ENCODE measurements at regions of chr5 and their contacts with region 1.

Region 1: GRCh38 chr5:141557681-141558136 is 61.1 kb downstream of the DIAPH1 start:
- DNase-seq: peak; percentile 94
- H3K4me3 ChIP-seq: peak overlapping the region in 2 of 3 experiments; percentile 24 to 25
- H3K27ac ChIP-seq: peak overlapping the region; percentile 45
- H3K4me1 ChIP-seq: peaks cover 35% of the 10 kb centered on the region
- H3K27me3 ChIP-seq: no peaks in the 10 kb centered on the region
- CTCF ChIP-seq: peak; percentile 79 to 87
- POLR2A ChIP-seq: no peak

Region 2: DNA sequence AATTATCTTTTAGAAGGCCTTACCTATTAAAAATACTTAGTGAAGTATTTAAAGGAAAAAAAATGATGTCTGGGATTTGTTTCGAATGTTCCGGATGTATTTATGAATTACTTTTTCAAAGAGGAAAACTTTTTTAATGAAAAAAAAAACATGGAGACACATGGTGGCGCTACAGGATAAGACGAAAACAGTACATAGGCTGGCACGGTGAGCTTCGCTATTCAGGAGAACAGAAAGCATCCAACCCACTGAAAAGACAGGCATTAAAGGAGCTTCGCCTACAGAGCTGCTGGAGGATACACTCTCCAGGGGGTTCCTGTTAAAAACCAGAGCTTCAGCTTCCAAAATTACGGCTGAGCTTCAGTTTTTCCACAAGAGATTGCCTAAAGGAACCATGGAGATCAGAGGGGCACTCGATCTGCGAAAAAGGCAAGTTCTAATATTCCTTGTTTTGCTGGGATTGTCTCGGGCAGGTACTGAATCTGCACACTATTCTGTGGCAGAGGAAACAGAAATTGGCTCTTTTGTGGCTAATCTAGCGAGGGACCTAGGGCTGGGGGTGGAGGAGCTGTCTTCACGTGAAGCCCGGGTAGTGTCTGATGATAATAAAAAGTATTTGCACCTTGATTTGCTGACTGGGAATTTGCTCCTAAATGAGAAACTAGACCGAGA is 334.5 kb before region 1 on chr5 and contains the start of gene PCDHB14:
- CTCF ChIA-PET with region 1: interaction called, 35 read pairs
- POLR2A ChIA-PET with region 1: no interaction called
- dilution Hi-C with region 1: no loop called
- intact Hi-C with region 1: no loop called
- DNase-seq: peak; percentile 31
- H3K4me3 ChIP-seq: peak within 1 kb of the TSS in 1 of 3 experiments; percentile 32
- H3K27ac ChIP-seq: no peak within 1 kb of the TSS
- H3K4me1 ChIP-seq: no peaks in the 10 kb centered on the region
- H3K27me3 ChIP-seq: no peaks in the 10 kb centered on the region
- CTCF ChIP-seq: no peak
- POLR2A ChIP-seq: no peak
- total RNA-seq, gene PCDHB14: 0.55 and 1.0 TPM in 2 replicates

Region 3: DNA sequence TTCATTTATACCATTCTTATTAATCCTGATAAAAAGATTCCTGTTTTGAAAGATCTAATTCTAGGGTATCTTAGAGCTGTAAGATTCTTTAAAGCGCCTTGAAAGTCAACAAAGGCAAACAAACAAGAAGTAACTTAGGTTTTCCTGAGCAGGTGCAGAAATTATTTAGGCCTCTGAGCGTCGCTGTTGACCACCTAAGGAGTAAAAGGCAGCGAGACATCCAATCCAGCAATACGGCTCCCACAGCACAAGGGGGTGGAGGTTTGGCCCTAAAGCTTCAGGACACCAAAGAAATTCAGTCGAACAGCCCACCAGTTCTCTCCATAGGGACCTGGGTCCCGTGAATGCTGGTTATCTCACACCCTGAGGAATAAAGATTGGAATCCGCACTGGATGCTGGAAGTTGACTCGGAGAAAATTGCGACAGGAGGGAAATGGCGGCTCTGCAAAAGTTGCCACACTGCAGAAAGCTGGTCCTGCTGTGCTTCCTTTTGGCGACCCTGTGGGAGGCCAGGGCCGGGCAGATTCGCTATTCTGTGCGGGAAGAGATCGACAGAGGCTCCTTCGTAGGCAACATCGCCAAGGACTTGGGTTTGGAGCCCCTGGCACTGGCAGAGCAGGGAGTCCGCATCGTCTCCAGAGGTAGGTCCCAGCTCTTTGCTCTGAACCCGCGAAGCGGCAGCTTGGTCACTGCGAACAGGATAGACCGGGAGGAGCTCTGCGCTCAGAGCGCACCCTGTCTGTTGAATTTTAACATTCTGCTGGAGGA is 219.0 kb before region 1 on chr5 and contains the start of gene PCDHGA2:
- CTCF ChIA-PET with region 1: interaction called, 38 read pairs
- POLR2A ChIA-PET with region 1: no interaction called
- dilution Hi-C with region 1: no loop called
- intact Hi-C with region 1: no loop called
- DNase-seq: peak; percentile 59
- H3K4me3 ChIP-seq: peak within 1 kb of the TSS in 2 of 3 experiments; percentile 16 to 53
- H3K27ac ChIP-seq: no peak within 1 kb of the TSS
- H3K4me1 ChIP-seq: no peaks in the 10 kb centered on the region
- H3K27me3 ChIP-seq: peaks cover 15 to 66% of the 10 kb centered on the region in 2 experiments
- CTCF ChIP-seq: peak; percentile 43 to 54
- POLR2A ChIP-seq: no peak
- total RNA-seq, gene PCDHGA2: 0.58 and 1.2 TPM in 2 replicates

Region 4: DNA sequence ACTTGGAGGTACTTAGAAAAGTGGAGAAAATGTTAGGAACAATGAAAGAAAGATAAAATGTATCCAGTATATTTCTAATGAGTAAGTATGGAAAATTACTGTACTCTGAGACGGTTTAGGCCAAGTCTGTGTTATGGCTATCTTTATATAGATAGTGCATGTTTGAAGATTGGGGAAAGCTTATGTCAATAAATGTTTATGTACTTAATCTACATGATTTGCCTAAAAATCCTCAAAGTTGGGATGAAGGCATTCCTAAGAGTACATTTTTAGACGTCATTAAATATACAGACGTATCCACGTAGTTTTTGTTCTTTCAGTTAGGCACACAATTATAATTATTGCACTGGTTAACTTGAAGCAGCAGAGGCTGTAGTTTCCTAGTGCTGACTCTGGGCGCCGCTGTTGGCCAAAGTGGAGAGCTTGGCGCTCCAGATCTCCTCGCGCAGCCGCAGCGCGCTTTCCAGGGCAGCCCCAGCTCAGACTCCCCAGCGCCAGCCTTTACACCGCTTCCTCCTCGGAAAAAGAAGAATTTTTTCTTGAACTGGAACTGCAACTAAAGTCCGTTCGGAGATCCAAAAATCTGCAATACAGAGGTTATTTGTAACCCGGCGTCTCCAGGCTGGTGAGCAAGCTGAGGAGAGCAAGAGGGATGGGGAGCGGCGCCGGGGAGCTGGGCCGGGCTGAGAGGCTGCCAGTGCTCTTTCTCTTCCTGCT is 170.3 kb before region 1 on chr5 and contains the start of gene PCDHGB4:
- CTCF ChIA-PET with region 1: interaction called, 15 read pairs
- POLR2A ChIA-PET with region 1: no interaction called
- dilution Hi-C with region 1: no loop called
- intact Hi-C with region 1: no loop called
- DNase-seq: peak; percentile 30
- H3K4me3 ChIP-seq: peak within 1 kb of the TSS in 2 of 3 experiments; percentile 9 to 22
- H3K27ac ChIP-seq: no peak within 1 kb of the TSS
- H3K4me1 ChIP-seq: no peaks in the 10 kb centered on the region
- H3K27me3 ChIP-seq: peaks cover 35 to 78% of the 10 kb centered on the region in 2 experiments
- CTCF ChIP-seq: peak; percentile 46 to 51
- POLR2A ChIP-seq: no peak
- total RNA-seq, gene PCDHGB4: 4.4 and 6.5 TPM in 2 replicates

Region 5: GRCh38 chr5:141420855-141421496 is 136.7 kb before region 1 on chr5 and contains the start of gene PCDHGA11:
- CTCF ChIA-PET with region 1: interaction called, 335 read pairs
- POLR2A ChIA-PET with region 1: interaction called, 8 read pairs
- dilution Hi-C with region 1: no loop called
- intact Hi-C with region 1: loop called (anchors 1 kb)
- DNase-seq: peak; percentile 78
- H3K4me3 ChIP-seq: peak within 1 kb of the TSS; percentile 39 to 83 (median 66)
- H3K27ac ChIP-seq: no peak within 1 kb of the TSS
- H3K4me1 ChIP-seq: peaks cover 15% of the 10 kb centered on the region
- H3K27me3 ChIP-seq: peaks cover 40 to 84% of the 10 kb centered on the region in 2 experiments
- CTCF ChIP-seq: peak; percentile 53 to 71
- POLR2A ChIP-seq: no peak
- total RNA-seq, gene PCDHGA11: 10.3 and 11.5 TPM in 2 replicates

Region 6: DNA sequence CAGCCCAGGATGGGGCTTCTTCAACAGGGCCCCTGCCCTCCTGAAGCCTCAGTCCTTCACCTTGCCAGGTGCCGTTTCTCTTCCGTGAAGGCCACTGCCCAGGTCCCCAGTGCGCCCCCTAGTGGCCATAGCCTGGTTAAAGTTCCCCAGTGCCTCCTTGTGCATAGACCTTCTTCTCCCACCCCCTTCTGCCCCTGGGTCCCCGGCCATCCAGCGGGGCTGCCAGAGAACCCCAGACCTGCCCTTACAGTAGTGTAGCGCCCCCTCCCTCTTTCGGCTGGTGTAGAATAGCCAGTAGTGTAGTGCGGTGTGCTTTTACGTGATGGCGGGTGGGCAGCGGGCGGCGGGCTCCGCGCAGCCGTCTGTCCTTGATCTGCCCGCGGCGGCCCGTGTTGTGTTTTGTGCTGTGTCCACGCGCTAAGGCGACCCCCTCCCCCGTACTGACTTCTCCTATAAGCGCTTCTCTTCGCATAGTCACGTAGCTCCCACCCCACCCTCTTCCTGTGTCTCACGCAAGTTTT is 45.3 kb before region 1 on chr5:
- CTCF ChIA-PET with region 1: interaction called, 25 read pairs
- POLR2A ChIA-PET with region 1: interaction called, 3 read pairs
- dilution Hi-C with region 1: no loop called
- intact Hi-C with region 1: loop called (anchors 1 kb)
- DNase-seq: peak; percentile 76
- H3K4me3 ChIP-seq: peak overlapping the region; percentile 44 to 51 (median 49)
- H3K27ac ChIP-seq: peak overlapping the region; percentile 19
- H3K4me1 ChIP-seq: peaks cover 31% of the 10 kb centered on the region
- H3K27me3 ChIP-seq: no peaks in the 10 kb centered on the region
- CTCF ChIP-seq: peak; percentile 89 to 94
- POLR2A ChIP-seq: no peak

Region 7: DNA sequence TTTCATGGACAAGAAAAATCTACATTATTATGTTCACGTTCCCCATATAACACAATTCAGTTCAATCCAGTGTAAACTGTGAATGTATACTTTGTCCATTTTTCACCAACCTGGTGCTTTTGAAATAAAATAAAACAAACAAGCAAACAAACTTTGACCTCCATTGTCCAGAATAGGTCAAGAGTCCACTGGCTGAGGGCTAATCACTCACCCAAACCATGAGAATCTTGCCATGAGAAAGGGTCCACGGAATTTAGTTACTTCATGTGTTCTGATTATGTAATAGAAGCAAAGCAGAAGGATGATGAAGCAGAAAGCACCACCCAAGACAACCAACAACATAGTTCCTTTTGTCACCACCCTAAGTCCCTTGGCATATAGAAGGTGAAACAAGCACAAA is 32.4 kb after region 1 on chr5:
- CTCF ChIA-PET with region 1: no interaction called
- POLR2A ChIA-PET with region 1: no interaction called
- dilution Hi-C with region 1: no loop called
- intact Hi-C with region 1: no loop called
- DNase-seq: no peak
- H3K4me3 ChIP-seq: no peak overlapping the region
- H3K27ac ChIP-seq: no peak overlapping the region
- H3K4me1 ChIP-seq: no peaks in the 10 kb centered on the region
- H3K27me3 ChIP-seq: no peaks in the 10 kb centered on the region
- CTCF ChIP-seq: no peak
- POLR2A ChIP-seq: no peak

Measured in endothelial cell of umbilical vein (primary cell).